CD8-positive, alpha-beta T cell (primary cell): ENCODE measurements at regions of chr3 and their contacts with region 1.

Region 1: DNA sequence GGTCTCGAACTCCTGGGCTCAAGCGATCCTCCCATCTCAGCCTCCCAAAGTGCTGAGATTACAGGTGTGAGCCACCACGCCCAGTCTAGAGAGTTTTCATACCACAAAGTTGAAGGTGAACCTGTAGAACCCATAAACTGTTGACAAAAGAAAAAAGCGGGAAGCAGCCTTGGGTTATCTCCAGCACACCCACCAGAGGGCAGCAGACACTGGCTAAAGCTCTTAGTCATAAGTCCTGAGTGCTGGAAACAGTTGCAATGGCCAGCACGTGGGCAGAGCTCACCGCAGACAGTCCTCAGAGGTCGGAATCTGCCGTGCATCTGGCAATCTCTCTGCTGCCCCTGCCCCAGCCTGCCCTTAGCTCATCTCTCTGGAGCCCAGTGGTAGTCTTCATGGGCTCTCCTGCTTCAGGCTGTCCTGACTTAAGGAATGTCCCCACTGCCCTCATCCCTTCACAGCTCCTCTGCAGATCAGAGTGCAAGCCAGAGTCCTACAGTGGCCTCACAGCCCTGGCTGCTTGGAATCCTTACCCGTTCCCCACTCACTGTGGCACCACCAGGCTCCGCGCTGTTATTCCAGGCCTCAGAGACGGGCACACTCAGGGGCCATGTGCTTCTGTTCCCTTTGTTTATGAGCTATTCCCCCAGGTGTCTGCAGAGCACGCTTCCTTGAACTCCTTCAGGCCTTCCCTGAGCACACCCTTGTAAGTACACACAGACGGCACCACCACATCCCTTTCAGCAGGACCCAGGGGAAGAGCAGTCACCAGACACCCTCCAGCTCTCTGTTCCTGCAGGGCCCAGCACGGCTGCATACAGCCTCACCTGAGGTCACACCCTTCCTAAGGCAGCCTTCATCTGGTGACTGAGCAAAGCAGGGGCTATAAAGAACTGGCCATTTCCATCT is 8.8 kb upstream of the ELP6 start:
- DNase-seq: peak; percentile 47 to 85 (median 71)
- ATAC-seq: peak; percentile 90
- H3K4me3 ChIP-seq: no peak overlapping the region
- H3K4me3 Mint-ChIP-seq: no peak overlapping the region
- H3K27ac ChIP-seq: no peak overlapping the region
- H3K27ac Mint-ChIP-seq: no peak overlapping the region
- H3K4me1 ChIP-seq: no peaks in the 10 kb centered on the region
- H3K4me1 Mint-ChIP-seq: no peaks in the 10 kb centered on the region
- H3K27me3 ChIP-seq: no peaks in the 10 kb centered on the region
- H3K27me3 Mint-ChIP-seq: no peaks in the 10 kb centered on the region
- CTCF ChIP-seq: peak; percentile 66

Region 2: DNA sequence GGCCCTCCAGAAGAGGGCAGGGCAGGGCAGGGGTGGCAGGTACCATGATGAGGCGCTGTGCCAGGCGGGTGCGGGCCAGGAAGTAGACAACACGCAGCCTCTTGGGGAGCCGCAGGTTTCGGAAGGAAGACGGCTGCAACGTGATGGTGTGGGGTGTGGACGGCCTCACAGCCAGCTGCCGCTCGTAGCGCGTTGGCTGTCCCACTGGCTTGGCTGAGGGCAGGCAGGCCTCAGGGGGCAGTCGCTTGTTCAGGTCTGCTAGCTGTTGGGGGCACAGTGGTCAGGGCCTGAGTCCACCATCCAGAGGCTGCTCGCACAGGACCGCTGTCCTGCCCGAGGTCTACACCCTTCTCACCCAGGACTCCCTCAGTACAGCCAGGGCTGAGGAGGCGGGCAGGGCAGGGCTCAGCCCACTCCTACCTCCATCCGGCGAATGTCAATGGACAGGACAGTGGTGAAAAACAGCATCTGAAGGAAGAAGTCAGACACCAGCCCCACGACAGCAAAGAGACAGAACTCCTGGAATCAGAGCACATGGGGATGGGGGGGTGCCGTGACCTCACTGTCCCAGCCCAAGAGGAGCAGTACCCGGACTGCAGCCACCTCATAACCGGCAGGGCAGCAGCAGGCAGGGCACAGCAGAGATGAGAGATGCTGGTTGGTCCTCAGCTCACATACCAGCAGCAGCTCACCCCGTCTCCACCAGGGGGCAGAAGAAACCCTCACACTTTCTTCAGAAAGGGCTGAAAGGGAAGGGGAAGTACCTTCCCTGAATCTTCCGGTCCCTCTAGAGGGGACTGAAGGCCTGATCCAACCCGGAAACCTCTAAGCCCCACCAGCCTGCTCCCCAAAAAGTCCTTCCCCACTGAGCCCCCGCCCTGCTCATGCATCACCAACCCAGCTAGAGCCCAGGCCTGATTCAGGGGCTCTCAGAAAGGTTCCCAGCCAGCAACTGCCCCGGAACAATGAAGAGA is 101.5 kb before region 1 on chr3:
- CTCF ChIA-PET with region 1: interaction called, 10 read pairs
- POLR2A ChIA-PET with region 1: no interaction called
- intact Hi-C with region 1: no loop called
- DNase-seq: peak; percentile 79 to 93 (median 89)
- ATAC-seq: peak; percentile 99
- H3K4me3 ChIP-seq: peak overlapping the region in 1 of 2 experiments; percentile 32
- H3K4me3 Mint-ChIP-seq: peak overlapping the region; percentile 70
- H3K27ac ChIP-seq: peak overlapping the region; percentile 53 to 90
- H3K27ac Mint-ChIP-seq: peak overlapping the region; percentile 99
- H3K4me1 ChIP-seq: peaks cover 14% of the 10 kb centered on the region
- H3K4me1 Mint-ChIP-seq: peaks cover 15% of the 10 kb centered on the region
- H3K27me3 ChIP-seq: no peaks in the 10 kb centered on the region
- H3K27me3 Mint-ChIP-seq: no peaks in the 10 kb centered on the region
- CTCF ChIP-seq: peak; percentile 91

Region 3: DNA sequence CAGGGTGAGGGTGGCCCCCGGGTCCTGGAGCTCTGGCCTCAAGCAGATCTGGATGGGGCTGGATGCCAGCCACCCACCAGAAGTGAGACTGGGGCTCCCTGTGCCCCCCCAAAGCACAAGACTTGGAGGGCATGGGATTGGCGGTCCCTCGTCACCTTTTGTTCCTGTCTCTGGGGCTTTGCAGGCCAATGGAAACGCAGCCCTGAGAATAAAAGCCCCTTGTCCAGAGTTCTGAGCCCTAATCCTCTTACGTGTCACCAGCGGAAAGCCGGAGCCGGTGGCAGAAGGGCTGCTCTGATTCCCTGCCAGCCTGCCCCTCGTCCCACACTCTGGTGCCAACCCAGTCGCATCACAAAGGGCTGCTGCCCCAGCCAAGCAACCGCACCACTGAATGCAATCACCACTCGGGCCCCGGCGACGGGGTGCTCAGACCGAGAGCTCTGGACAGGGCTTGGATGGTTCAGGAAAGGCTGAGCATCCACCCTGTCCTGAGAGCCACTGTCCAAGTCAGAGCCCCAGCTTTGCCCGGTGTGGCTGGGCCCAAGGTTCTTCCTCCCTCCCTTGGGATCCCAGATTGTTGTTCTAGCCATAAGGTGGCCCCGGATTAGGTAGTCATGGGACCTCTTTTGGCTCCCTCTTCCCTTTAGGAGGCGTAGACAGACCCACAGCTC is 14.0 kb after region 1 on chr3:
- CTCF ChIA-PET with region 1: interaction called, 36 read pairs
- POLR2A ChIA-PET with region 1: no interaction called
- intact Hi-C with region 1: no loop called
- DNase-seq: no peak
- ATAC-seq: no peak
- H3K4me3 ChIP-seq: no peak overlapping the region
- H3K4me3 Mint-ChIP-seq: no peak overlapping the region
- H3K27ac ChIP-seq: no peak overlapping the region
- H3K27ac Mint-ChIP-seq: no peak overlapping the region
- H3K4me1 ChIP-seq: no peaks in the 10 kb centered on the region
- H3K4me1 Mint-ChIP-seq: no peaks in the 10 kb centered on the region
- H3K27me3 ChIP-seq: no peaks in the 10 kb centered on the region
- H3K27me3 Mint-ChIP-seq: peaks cover 10% of the 10 kb centered on the region
- CTCF ChIP-seq: no peak

Region 4: GRCh38 chr3:47791193-47791855 is 269.0 kb after region 1 on chr3:
- CTCF ChIA-PET with region 1: interaction called, 78 read pairs
- POLR2A ChIA-PET with region 1: interaction called, 5 read pairs
- intact Hi-C with region 1: loop called (anchors 1 kb)
- DNase-seq: no peak
- ATAC-seq: no peak
- H3K4me3 ChIP-seq: no peak overlapping the region
- H3K4me3 Mint-ChIP-seq: no peak overlapping the region
- H3K27ac ChIP-seq: no peak overlapping the region
- H3K27ac Mint-ChIP-seq: no peak overlapping the region
- H3K4me1 ChIP-seq: no peaks in the 10 kb centered on the region
- H3K4me1 Mint-ChIP-seq: peaks cover 5% of the 10 kb centered on the region
- H3K27me3 ChIP-seq: no peaks in the 10 kb centered on the region
- H3K27me3 Mint-ChIP-seq: no peaks in the 10 kb centered on the region
- CTCF ChIP-seq: no peak

Region 5: GRCh38 chr3:47989981-47990440 is 467.7 kb after region 1 on chr3:
- CTCF ChIA-PET with region 1: interaction called, 4 read pairs
- POLR2A ChIA-PET with region 1: no interaction called
- intact Hi-C with region 1: loop called (anchors 1 kb)
- DNase-seq: peak; percentile 27 to 84 (median 69)
- ATAC-seq: peak; percentile 97
- H3K4me3 ChIP-seq: no peak overlapping the region
- H3K4me3 Mint-ChIP-seq: no peak overlapping the region
- H3K27ac ChIP-seq: no peak overlapping the region
- H3K27ac Mint-ChIP-seq: no peak overlapping the region
- H3K4me1 ChIP-seq: no peaks in the 10 kb centered on the region
- H3K4me1 Mint-ChIP-seq: peaks cover 1% of the 10 kb centered on the region
- H3K27me3 ChIP-seq: no peaks in the 10 kb centered on the region
- H3K27me3 Mint-ChIP-seq: no peaks in the 10 kb centered on the region
- CTCF ChIP-seq: peak; percentile 85

Region 6: GRCh38 chr3:48151058-48151806 is 628.9 kb after region 1 on chr3:
- CTCF ChIA-PET with region 1: interaction called, 3 read pairs
- POLR2A ChIA-PET with region 1: no interaction called
- intact Hi-C with region 1: loop called in 1 of 2 experiments (anchors 10 kb)
- DNase-seq: peak; percentile 13 to 69 (median 52)
- ATAC-seq: peak; percentile 85
- H3K4me3 ChIP-seq: no peak overlapping the region
- H3K4me3 Mint-ChIP-seq: no peak overlapping the region
- H3K27ac ChIP-seq: no peak overlapping the region
- H3K27ac Mint-ChIP-seq: no peak overlapping the region
- H3K4me1 ChIP-seq: no peaks in the 10 kb centered on the region
- H3K4me1 Mint-ChIP-seq: no peaks in the 10 kb centered on the region
- H3K27me3 ChIP-seq: no peaks in the 10 kb centered on the region
- H3K27me3 Mint-ChIP-seq: peaks cover 3% of the 10 kb centered on the region
- CTCF ChIP-seq: peak; percentile 45